AG04449 (cell line): ENCODE measurements at regions of chr9 and their contacts with region 1.

Region 1: GRCh38 chr9:94681508-94681907 is 42.2 kb upstream of the FBP1 start:
- DNase-seq: no peak
- H3K4me3 ChIP-seq: no peak overlapping the region
- CTCF ChIP-seq: peak; percentile 71

Region 2: GRCh38 chr9:94697972-94698581 is 16.6 kb after region 1 on chr9:
- CTCF ChIA-PET with region 1: interaction called, 33 read pairs
- POLR2A ChIA-PET with region 1: interaction called, 4 read pairs
- DNase-seq: no peak
- H3K4me3 ChIP-seq: no peak overlapping the region
- CTCF ChIP-seq: no peak

Region 3: DNA sequence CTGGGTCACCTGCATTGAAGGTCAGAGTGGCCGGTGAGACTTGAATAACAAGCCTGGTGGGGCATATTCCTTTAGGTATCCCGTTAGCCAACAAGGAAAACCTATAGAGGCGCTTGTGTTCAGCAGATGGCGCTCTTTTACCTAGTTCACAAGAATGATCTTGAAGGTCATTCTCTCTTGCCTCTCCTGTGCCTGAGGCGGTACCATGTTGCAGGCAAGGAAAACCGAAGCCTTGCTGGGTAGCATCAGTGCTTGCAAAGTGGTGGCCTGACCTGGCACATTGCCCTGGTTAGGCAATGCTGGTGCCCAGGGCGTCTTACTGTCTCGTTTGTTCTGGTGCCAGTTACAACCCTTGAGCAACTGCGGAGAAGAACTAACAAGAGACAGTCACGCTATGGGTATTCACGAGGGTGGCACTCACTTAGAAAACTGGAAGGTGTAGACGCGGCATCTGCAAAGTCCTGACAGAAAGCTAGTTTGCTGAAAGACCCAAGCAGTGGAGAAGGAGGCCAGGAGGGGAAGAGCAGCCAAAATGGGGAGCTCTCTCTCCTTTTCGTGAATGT is 101.7 kb after region 1 on chr9:
- CTCF ChIA-PET with region 1: interaction called, 42 read pairs
- POLR2A ChIA-PET with region 1: interaction called, 5 read pairs
- DNase-seq: peak; percentile 71
- H3K4me3 ChIP-seq: no peak overlapping the region; the same call in 1 of the 2 replicates
- CTCF ChIP-seq: peak; percentile 57

Region 4: GRCh38 chr9:94912700-94913249 is 231.3 kb after region 1 on chr9:
- CTCF ChIA-PET with region 1: interaction called, 22 read pairs
- POLR2A ChIA-PET with region 1: no interaction called
- DNase-seq: no peak
- H3K4me3 ChIP-seq: no peak overlapping the region
- CTCF ChIP-seq: no peak

Region 5: DNA sequence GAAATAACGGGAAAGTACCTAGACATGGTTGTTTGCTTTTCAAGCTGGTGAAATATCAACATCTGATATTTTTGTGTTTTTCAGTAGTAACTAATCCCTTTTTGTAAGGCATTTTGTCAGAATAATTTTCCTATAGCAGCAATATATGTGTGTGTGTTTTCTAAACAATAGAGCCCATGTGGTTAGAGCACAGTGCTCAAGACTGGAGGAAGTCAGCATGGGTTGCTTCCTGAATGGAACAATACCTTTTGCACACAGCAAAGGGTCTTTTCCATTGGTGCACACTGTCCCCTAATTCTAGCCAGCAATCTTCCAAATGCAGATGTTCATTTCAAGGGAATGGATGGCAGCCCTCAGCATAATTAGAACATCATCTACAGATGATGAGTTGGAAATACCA is 315.1 kb after region 1 on chr9:
- CTCF ChIA-PET with region 1: interaction called, 14 read pairs
- POLR2A ChIA-PET with region 1: no interaction called
- DNase-seq: no peak
- H3K4me3 ChIP-seq: no peak overlapping the region
- CTCF ChIP-seq: no peak

Region 6: GRCh38 chr9:95073021-95073607 is 391.6 kb after region 1 on chr9:
- CTCF ChIA-PET with region 1: interaction called, 20 read pairs
- POLR2A ChIA-PET with region 1: no interaction called
- DNase-seq: no peak
- H3K4me3 ChIP-seq: no peak overlapping the region
- CTCF ChIP-seq: peak; percentile 33